Calu3 (cell line): ENCODE measurements at regions of chr14 and their contacts with region 1.

Region 1: GRCh38 chr14:79638672-79639266 is 572.5 kb downstream of the DIO2 start:
- DNase-seq: no peak
- H3K4me3 Mint-ChIP-seq: no peak overlapping the region
- H3K27ac Mint-ChIP-seq: no peak overlapping the region
- H3K4me1 Mint-ChIP-seq: no peaks in the 10 kb centered on the region
- H3K27me3 Mint-ChIP-seq: no peaks in the 10 kb centered on the region
- CTCF ChIP-seq: no peak

Region 2: DNA sequence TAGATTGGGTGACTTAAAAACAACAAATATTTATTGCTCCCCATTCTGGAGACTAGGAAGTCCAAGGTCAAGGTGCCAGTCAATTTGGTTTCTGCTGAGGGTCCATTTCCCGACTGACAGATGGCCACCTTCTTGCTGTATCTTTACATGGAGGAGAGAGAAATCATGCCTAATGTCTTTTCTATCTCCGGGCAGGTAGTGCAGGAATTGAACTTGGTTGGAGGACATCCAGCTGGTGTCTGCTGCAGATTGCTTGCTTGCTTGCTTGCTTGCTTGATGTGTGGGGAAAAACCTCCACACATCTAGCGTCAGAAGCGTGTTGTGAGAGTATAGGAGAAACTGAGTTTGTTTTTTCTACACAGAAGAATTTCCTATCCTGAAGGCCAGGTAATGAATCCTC is 11.1 kb after region 1 on chr14:
- CTCF ChIA-PET with region 1: no interaction called
- intact Hi-C with region 1: loop called (anchors 1 kb)
- DNase-seq: no peak
- H3K4me3 Mint-ChIP-seq: no peak overlapping the region
- H3K27ac Mint-ChIP-seq: no peak overlapping the region
- H3K4me1 Mint-ChIP-seq: no peaks in the 10 kb centered on the region
- H3K27me3 Mint-ChIP-seq: no peaks in the 10 kb centered on the region
- CTCF ChIP-seq: no peak